ENCODE measurements at regions of chr11 and their contacts with region 1.

Region 1: GRCh38 chr11:47305734-47306483 is 36.0 kb downstream of the MADD start:
- DNase-seq: no peak
- ATAC-seq: peak; percentile 27
- H3K4me3 ChIP-seq: no peak overlapping the region
- H3K27ac ChIP-seq: no peak overlapping the region
- H3K4me1 ChIP-seq: no peaks in the 10 kb centered on the region
- H3K27me3 ChIP-seq: no peaks in the 10 kb centered on the region
- CTCF ChIP-seq: no peak
- POLR2A ChIP-seq: no peak
- RAD21 ChIP-seq: no peak

Region 2: DNA sequence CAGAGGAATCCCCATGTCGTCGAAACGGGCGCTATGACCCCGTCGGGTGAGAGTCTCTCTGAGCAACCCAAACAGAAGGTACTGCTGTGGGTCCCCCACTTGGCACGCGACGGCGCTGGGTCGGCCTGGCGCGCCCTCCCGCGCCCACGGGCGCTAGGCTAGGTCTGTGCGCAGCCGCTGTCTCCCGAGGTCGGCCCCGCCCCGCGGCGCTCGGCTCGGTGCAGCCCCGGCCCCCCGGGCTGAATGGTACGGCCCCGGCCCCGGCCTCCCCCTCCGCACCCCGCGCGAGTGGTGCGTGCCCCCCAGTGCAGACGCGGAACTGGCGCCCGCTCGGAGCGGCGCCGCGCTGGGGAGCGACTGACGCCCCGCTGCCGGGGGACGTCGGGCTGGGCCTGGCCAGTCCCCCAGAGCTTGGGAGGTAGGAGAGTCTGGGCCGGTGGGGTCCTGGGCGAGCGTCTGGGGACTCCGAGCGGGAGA is 36.0 kb before region 1 on chr11 and contains the start of gene MADD:
- CTCF ChIA-PET with region 1: no interaction called
- POLR2A ChIA-PET with region 1: no interaction called
- dilution Hi-C with region 1: no loop called
- in situ Hi-C with region 1: no loop called
- intact Hi-C with region 1: loop called (anchors 5 kb)
- DNase-seq: peak; percentile 78
- ATAC-seq: peak; percentile 91
- H3K4me3 ChIP-seq: peak within 1 kb of the TSS; percentile 89
- H3K27ac ChIP-seq: peak within 1 kb of the TSS; percentile 99
- H3K4me1 ChIP-seq: peaks cover 18% of the 10 kb centered on the region
- H3K27me3 ChIP-seq: no peaks in the 10 kb centered on the region
- CTCF ChIP-seq: no peak
- POLR2A ChIP-seq: peak; percentile 68
- RAD21 ChIP-seq: no peak
- total RNA-seq, gene MADD: 11.1 and 13.3 TPM in 2 replicates

Region 3: DNA sequence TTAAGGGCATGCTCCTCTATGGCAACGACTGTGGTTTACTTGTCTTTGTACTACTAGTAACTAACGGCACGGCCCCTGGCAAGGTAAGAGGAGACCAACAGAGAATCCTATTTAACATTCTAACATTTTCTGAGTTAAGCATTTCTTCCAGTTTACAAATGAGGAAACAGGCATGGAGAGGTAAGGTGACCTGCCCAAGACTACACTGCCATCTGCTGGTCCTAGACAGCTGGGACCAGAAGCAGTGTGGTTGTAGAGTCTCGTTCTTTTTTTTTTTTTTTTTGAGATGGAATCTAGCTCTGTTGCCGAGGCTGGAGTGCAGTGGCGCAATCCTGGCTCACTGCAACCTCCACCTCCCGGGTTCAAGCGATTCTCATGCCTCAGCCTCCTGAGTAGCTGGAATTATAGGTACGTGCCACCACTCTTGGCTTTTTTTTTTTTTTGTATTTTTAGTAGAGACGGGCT is 148.3 kb after region 1 on chr11:
- CTCF ChIA-PET with region 1: no interaction called
- POLR2A ChIA-PET with region 1: no interaction called
- dilution Hi-C with region 1: no loop called
- in situ Hi-C with region 1: no loop called
- intact Hi-C with region 1: no loop called
- DNase-seq: peak; percentile 85
- ATAC-seq: peak; percentile 93
- H3K4me3 ChIP-seq: no peak overlapping the region
- H3K27ac ChIP-seq: no peak overlapping the region
- H3K4me1 ChIP-seq: no peaks in the 10 kb centered on the region
- H3K27me3 ChIP-seq: no peaks in the 10 kb centered on the region
- CTCF ChIP-seq: peak; percentile 81
- POLR2A ChIP-seq: no peak
- RAD21 ChIP-seq: peak; percentile 85

Region 4: DNA sequence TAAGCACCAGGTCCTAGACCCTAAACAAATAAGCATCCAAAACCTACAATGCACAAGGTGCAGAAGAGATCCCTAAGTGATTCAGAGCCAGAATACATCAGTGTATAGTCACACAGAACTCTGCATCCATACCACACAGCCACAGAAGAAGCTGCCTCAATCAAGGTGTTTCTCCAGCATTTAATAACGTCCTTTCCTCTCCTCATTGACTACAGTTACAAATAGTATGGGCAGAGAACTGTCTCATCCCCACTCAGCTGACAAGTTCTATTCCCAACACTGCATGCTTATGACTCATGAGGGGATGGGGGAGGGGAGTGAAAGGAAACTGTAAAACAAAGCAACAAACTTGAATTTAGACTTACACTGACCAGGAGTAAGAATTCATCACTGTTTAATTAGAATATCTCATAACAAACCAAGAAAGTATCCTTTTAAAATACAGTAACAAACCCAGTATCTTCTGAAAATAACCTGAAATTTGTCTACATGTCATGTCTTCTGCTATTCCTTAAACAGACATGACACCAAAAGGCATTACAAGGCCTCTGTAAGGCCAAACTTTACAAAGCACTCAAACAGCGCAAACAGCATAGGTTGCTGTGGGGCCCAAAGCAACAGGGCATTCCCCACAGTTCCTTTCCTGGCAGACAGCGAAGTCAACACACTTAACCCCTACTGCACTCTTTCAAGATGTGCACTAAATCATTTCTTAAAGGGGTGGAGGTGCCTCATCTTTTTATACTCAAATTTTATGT is 217.7 kb after region 1 on chr11:
- CTCF ChIA-PET with region 1: no interaction called
- POLR2A ChIA-PET with region 1: no interaction called
- dilution Hi-C with region 1: no loop called
- in situ Hi-C with region 1: no loop called
- intact Hi-C with region 1: no loop called
- DNase-seq: peak; percentile 87
- ATAC-seq: peak; percentile 91
- H3K4me3 ChIP-seq: no peak overlapping the region
- H3K27ac ChIP-seq: peak overlapping the region; percentile 51; the same call in 1 of the 2 replicates
- H3K4me1 ChIP-seq: peaks cover 14% of the 10 kb centered on the region
- H3K27me3 ChIP-seq: no peaks in the 10 kb centered on the region
- CTCF ChIP-seq: no peak
- POLR2A ChIP-seq: no peak
- RAD21 ChIP-seq: no peak

Measured in IMR-90 (cell line).